ENCODE measurements at regions of chrX and their contacts with region 1.

Region 1: DNA sequence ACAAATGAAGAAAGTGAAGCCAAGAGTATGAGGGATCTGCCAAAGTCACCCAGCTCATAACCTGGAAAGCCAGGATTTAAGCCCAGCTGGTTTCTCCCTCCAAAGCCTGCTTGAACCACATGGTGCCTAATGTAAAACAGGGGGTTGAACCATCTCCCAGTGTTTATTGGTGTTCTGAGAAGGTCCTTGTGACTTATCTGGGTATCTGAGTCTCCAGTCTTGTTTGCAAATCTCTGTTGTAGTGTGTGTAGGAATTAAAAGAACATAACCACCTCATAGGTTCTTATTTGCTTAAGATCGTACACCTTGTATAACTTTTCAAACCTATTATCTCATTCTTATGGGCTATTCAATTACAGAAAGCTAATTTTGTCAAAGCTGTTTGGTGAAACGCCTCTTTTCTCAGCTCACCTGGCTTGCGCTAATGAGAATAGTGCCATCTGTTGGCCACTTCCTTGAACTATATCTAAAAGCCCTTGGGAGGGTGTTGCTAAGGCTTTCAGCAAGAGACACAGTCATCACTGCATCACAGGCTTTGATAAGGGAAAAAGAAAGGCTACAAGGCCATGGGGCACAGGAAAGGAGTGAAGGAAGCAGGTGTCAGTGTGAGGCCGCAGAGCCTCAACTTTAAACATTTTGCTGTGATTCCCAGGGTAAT is 34.0 kb downstream of the ETDB start:
- DNase-seq: peak; percentile 43 to 77 (median 48)
- ATAC-seq: peak; percentile 97
- H3K4me3 ChIP-seq: no peak overlapping the region
- H3K27ac ChIP-seq: no peak overlapping the region
- H3K4me1 ChIP-seq: no peaks in the 10 kb centered on the region
- H3K27me3 ChIP-seq: no peaks in the 10 kb centered on the region
- CTCF ChIP-seq: peak; percentile 67 to 80 (median 74)
- EP300 ChIP-seq: no peak
- POLR2A ChIP-seq: no peak
- RAD21 ChIP-seq: peak; percentile 38 to 62

Region 2: DNA sequence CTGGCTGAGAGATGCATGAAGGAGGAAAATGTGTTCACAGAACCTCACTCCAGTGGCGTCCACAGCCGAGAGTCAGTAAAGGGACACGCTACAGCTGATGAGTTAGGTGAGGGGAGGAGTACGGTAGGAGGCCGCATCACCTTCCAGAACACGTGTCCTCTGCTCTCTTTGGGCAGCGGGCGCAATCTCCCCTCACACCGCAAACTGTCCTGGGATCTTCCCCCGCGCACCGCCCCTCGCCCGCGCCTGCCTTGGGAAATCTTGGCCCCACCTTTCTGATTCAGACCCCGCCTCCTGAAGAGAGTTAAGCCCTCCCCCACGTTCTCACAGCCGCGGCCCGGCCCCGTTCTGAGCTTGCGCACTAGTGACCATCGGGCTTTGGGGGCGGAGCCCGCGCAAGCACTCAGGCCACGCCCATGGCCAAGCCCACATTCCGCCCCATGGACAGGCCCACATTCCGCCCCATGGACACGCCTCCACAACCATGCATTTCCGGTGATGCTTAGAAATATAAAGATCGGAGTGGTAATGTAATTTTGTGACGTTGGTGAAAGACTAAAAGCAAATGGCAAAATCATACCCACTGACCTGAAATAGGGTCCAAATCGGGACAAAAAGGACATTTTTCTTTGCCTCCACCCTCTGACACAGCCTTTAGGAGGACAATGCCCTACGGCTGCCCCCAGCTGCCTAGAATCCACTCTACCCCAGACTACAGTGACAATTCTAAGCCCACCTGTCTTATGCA is 82.3 kb before region 1 on chrX:
- CTCF ChIA-PET with region 1: no interaction called
- POLR2A ChIA-PET with region 1: interaction called, 3 read pairs
- in situ Hi-C with region 1: no loop called
- intact Hi-C with region 1: loop called (anchors 5 kb)
- DNase-seq: peak; percentile 92 to 98 (median 96)
- ATAC-seq: peak; percentile 99
- H3K4me3 ChIP-seq: peak overlapping the region; percentile 34
- H3K27ac ChIP-seq: no peak overlapping the region
- H3K4me1 ChIP-seq: peaks cover 5 to 7% of the 10 kb centered on the region in 2 experiments; a peak in 3 of 5 replicates
- H3K27me3 ChIP-seq: no peaks in the 10 kb centered on the region; a peak in 2 of 5 replicates
- CTCF ChIP-seq: no peak
- EP300 ChIP-seq: no peak
- POLR2A ChIP-seq: 0 out of 2 replicates have a peak, but pooled peaks have one; percentile 38
- RAD21 ChIP-seq: no peak

Measured in K562 (cell line).